ENCODE measurements at regions of chr19 and their contacts with region 1.

Region 1: GRCh38 chr19:42634409-42635232 is 39.9 kb upstream of the CEACAM8 start:
- DNase-seq: peak; percentile 42
- CTCF ChIP-seq: peak; percentile 78

Region 2: DNA sequence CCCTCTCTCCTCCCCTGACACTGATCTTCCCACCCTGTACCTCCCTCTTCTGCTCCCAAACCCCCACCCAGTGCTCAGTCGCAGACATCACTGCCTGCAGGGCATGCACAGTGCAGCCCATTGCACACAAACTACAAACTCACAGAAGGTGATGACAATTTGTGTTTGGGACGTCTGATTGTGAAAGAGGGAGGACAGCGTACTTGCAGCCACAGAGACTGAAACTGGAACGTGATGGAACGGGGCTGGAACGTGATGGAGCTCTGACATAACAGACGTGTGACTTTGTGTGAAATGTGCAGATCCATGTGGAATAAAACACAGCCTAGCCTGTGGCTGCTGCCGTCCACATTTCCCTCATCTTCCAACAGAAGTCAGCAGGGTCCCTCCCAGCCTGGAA is 17.4 kb after region 1 on chr19:
- CTCF ChIA-PET with region 1: interaction called, 10 read pairs
- POLR2A ChIA-PET with region 1: no interaction called
- DNase-seq: no peak
- CTCF ChIP-seq: no peak

Region 3: DNA sequence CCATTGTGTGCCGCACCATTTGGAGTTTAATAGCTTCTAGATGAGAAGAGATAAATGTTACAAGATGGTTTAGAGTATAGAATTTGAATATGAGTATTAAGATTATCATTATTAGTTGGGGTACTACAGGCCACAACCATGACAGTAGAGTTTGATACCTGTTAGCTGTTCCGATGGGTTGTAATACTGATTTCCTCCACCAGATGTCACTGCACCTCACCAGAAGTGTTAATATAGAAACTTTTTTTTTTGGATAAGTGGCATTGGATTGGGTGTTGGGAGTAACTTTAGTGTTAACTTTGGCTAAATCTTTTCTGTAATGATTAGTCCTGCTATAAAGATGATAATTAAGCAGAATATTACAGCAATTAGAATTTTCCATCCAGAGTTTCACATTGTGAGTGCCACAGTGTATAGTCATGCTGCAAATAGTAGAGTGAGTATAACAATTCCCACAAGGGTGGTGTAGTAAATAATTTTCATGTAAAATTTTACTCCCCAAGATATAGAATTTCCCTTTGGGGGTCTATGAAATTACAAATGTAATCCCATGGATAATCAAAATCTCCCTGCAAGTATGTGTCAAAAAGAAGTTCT is 49.4 kb after region 1 on chr19:
- CTCF ChIA-PET with region 1: no interaction called
- POLR2A ChIA-PET with region 1: no interaction called
- DNase-seq: peak; percentile 16
- CTCF ChIP-seq: peak; percentile 23

Measured in GM10248 (cell line).